GM12878 (cell line): ENCODE measurements at regions of chr2 and their contacts with region 1.

Region 1: DNA sequence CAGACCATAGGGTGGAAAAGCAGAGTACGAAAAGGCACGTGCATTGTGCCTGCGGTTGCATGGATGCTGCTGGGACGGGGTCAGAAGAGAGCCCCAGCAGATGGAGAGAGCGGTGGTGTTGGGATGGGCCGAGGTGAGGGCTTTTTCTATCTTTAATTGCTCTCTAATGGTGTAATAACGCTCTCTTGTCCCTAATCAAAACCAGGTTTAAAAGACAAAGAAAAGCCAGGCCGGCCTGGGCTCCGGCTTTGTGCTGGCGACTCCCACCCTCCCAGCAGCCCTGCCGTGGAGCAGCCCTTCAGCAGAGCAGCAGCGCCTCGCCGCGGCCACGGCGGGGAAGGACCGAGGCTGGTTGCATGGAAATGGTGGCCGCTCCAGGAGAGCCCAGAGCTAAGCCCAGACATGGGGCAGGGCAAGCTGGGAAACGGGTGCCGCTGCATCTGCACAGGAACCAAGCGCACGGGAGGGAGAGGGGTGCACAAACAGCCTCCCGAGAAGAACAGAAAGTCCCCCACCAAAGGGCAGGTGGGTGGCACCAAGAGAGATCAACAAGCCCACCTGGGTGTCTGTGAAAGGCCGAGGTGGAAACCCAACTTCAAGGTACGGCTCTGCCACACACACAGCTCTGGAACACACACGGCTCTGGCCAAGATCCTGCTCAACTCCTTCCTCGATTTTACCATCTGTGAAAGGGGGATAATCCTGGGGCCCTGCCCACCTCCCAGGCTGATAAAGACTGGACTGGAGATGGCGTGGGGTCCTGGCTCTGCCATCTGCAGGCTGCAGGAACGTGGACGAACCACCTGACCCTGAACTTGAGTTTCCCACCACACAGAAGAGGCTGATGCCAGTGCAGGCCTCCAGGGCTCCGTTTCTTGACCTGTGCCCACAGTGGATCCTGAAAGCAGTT is 15.0 kb downstream of the HS1BP3 start:
- DNase-seq: no peak
- ATAC-seq: peak; percentile 95
- H3K4me3 ChIP-seq: no peak overlapping the region
- H3K27ac ChIP-seq: no peak overlapping the region
- H3K4me1 ChIP-seq: peaks cover 17% of the 10 kb centered on the region
- H3K27me3 ChIP-seq: no peaks in the 10 kb centered on the region
- CTCF ChIP-seq: peak; percentile 81 to 93 (median 88)
- EP300 ChIP-seq: no peak
- POLR2A ChIP-seq: no peak
- RAD21 ChIP-seq: peak; percentile 98

Region 2: GRCh38 chr2:20424300-20425290 is 211.3 kb before region 1 on chr2:
- CTCF ChIA-PET with region 1: interaction called, 4 read pairs
- POLR2A ChIA-PET with region 1: no interaction called
- RAD21 ChIA-PET with region 1: no interaction called
- SMC1A ChIA-PET with region 1: interaction called, 11 read pairs
- in situ Hi-C with region 1: no loop called
- intact Hi-C with region 1: no loop called
- DNase-seq: peak; percentile 57
- ATAC-seq: peak; percentile 76
- H3K4me3 ChIP-seq: peak overlapping the region; percentile 17; the same call in 1 of the 2 replicates
- H3K27ac ChIP-seq: peak overlapping the region; percentile 68
- H3K4me1 ChIP-seq: peaks cover 34% of the 10 kb centered on the region
- H3K27me3 ChIP-seq: no peaks in the 10 kb centered on the region
- CTCF ChIP-seq: no peak
- EP300 ChIP-seq: no peak
- POLR2A ChIP-seq: 0 out of 2 replicates have a peak, but pooled peaks have one; percentile 32
- RAD21 ChIP-seq: no peak

Region 3: DNA sequence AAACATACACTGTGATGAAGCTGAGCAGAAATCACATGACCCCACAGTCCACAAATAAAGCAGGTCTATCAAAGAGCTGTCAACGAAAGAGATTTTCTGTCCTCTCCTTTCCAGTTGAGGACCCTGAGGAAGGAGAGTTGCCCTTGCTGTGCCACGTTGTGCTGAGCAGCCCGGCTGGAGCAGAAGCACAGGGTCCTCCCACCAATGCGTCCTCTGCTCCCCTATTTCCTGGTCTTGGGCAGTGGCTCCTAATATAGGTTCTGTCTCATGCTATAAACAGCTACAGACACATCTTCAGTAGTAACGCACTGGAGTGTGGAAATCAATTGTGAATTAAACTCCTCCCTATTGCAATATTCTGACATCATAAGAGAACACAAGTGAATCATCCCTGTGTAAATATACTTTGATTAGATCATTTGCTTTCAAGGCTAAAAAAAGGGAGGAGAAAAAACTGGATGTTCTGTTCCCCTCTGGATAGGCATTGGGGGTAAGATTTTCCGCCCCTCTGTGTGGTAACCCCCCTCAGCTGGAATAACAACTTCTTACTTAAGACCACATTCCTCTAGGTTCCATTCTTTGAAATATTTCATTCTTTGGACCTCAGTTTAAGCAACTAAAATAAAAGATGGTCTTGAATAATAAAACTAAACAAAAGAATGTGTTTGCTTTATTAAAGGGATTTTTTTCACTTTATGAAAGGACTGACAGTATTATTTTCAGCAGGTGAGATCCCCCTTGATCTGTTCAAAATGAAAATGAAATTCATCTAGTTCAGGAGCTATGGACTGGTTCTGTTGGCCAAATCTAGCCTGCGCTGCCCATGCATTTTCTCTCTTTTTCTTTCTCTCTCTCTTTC is 197.4 kb before region 1 on chr2:
- CTCF ChIA-PET with region 1: interaction called, 119 read pairs
- POLR2A ChIA-PET with region 1: interaction called, 4 read pairs
- RAD21 ChIA-PET with region 1: interaction called, 107 read pairs
- SMC1A ChIA-PET with region 1: interaction called, 56 read pairs
- in situ Hi-C with region 1: loop called (anchors 5 kb)
- intact Hi-C with region 1: loop called (anchors 1 kb)
- DNase-seq: no peak
- ATAC-seq: no peak
- H3K4me3 ChIP-seq: no peak overlapping the region
- H3K27ac ChIP-seq: no peak overlapping the region
- H3K4me1 ChIP-seq: no peaks in the 10 kb centered on the region
- H3K27me3 ChIP-seq: peaks cover 2 to 3% of the 10 kb centered on the region in 2 experiments; a peak in 2 of 4 replicates
- CTCF ChIP-seq: no peak
- EP300 ChIP-seq: no peak
- POLR2A ChIP-seq: no peak
- RAD21 ChIP-seq: no peak

Region 4: DNA sequence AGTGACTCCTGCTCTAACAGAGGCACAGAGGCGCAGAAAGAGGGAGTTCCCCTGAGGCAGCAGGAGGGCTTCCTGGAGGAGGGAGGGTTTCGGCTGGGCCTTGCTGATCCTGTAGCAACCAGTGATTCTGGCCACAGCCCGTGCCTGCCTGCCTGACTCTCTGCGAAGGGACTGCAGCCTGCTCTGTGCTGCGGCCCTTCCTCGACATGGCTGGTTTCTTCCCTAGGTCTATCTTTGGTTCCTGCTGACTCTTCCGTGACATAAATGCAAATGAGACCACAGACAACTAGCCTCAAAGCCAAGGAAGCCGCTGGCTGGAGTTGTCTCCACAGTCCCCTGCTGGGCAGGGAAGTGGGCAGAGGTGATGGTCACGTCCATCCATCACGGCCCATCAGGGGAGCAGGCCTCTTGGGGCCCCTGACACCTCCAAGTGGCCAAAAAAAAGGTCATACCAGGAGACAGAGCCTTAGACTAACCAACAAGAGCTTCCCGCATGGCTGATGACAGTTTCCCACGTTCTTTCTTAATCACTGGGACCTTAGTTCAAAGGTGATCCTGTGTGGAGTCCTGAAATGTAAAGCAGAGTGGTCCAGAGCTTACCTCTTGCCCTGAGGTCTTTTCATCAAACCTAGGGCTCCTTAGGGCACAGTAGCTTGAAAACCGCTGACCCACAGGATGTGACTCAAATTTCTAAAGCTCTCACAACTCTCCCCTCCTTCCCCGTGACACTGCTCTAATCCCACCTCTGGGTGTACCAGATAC is 40.3 kb before region 1 on chr2:
- CTCF ChIA-PET with region 1: interaction called, 6 read pairs
- POLR2A ChIA-PET with region 1: interaction called, 6 read pairs
- RAD21 ChIA-PET with region 1: interaction called, 11 read pairs
- SMC1A ChIA-PET with region 1: interaction called, 10 read pairs
- in situ Hi-C with region 1: no loop called
- intact Hi-C with region 1: loop called (anchors 1 kb)
- DNase-seq: peak; percentile 85
- ATAC-seq: peak; percentile 92
- H3K4me3 ChIP-seq: peak overlapping the region; percentile 25; the same call in 1 of the 2 replicates
- H3K27ac ChIP-seq: peak overlapping the region; percentile 79
- H3K4me1 ChIP-seq: peaks cover 38% of the 10 kb centered on the region
- H3K27me3 ChIP-seq: no peaks in the 10 kb centered on the region
- CTCF ChIP-seq: no peak
- EP300 ChIP-seq: peak; percentile 13 to 50; a peak in 3 of 4 replicates
- POLR2A ChIP-seq: peak; percentile 81
- RAD21 ChIP-seq: 0 out of 2 replicates have a peak, but pooled peaks have one; percentile 5

Region 5: GRCh38 chr2:20667151-20667530 is 31.2 kb after region 1 on chr2:
- CTCF ChIA-PET with region 1: no interaction called
- POLR2A ChIA-PET with region 1: no interaction called
- RAD21 ChIA-PET with region 1: no interaction called
- SMC1A ChIA-PET with region 1: no interaction called
- in situ Hi-C with region 1: no loop called
- intact Hi-C with region 1: no loop called
- DNase-seq: no peak
- ATAC-seq: peak; percentile 18
- H3K4me3 ChIP-seq: peak overlapping the region; percentile 73; the same call in 1 of the 2 replicates
- H3K27ac ChIP-seq: no peak overlapping the region
- H3K4me1 ChIP-seq: peaks cover 13% of the 10 kb centered on the region; the same call in 1 of the 2 replicates
- H3K27me3 ChIP-seq: peaks cover 22 to 33% of the 10 kb centered on the region in 2 experiments
- CTCF ChIP-seq: no peak
- EP300 ChIP-seq: no peak
- POLR2A ChIP-seq: no peak
- RAD21 ChIP-seq: no peak

Region 6: DNA sequence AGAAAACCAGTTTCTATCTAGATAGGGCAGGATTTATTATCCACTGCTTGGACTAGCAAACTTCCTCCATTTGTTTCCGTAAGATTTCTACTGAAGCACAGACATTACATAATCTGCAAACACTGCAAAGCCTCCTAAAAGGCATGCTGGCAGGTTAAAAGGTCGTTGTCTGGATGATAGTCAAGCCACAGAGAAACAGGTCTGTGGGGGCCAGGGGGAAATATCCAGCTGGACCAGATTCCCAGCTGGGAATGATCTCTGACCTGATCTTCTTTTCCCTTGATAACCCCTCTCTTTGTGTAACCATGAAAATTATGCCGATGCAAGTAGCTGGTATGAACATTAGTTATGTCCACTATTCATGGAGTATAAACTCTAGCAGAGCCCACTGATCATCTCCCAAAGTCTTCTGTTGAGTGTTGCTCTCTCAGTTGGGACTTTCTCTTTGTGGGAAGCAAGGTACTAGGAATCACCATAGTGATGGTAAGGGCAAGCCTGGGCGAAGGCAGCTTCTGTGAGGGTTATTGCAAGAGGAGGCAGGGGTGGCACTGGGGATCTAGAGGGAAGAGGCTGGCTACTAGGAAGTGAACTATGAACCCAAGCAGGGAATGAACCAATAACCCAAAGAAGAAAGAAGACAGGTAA is 92.3 kb after region 1 on chr2:
- CTCF ChIA-PET with region 1: no interaction called
- POLR2A ChIA-PET with region 1: no interaction called
- RAD21 ChIA-PET with region 1: no interaction called
- SMC1A ChIA-PET with region 1: no interaction called
- in situ Hi-C with region 1: no loop called
- intact Hi-C with region 1: no loop called
- DNase-seq: no peak
- ATAC-seq: no peak
- H3K4me3 ChIP-seq: no peak overlapping the region
- H3K27ac ChIP-seq: no peak overlapping the region; the same call in 1 of the 2 replicates
- H3K4me1 ChIP-seq: no peaks in the 10 kb centered on the region
- H3K27me3 ChIP-seq: no peaks in the 10 kb centered on the region
- CTCF ChIP-seq: no peak
- EP300 ChIP-seq: no peak
- POLR2A ChIP-seq: no peak
- RAD21 ChIP-seq: no peak

Region 7: DNA sequence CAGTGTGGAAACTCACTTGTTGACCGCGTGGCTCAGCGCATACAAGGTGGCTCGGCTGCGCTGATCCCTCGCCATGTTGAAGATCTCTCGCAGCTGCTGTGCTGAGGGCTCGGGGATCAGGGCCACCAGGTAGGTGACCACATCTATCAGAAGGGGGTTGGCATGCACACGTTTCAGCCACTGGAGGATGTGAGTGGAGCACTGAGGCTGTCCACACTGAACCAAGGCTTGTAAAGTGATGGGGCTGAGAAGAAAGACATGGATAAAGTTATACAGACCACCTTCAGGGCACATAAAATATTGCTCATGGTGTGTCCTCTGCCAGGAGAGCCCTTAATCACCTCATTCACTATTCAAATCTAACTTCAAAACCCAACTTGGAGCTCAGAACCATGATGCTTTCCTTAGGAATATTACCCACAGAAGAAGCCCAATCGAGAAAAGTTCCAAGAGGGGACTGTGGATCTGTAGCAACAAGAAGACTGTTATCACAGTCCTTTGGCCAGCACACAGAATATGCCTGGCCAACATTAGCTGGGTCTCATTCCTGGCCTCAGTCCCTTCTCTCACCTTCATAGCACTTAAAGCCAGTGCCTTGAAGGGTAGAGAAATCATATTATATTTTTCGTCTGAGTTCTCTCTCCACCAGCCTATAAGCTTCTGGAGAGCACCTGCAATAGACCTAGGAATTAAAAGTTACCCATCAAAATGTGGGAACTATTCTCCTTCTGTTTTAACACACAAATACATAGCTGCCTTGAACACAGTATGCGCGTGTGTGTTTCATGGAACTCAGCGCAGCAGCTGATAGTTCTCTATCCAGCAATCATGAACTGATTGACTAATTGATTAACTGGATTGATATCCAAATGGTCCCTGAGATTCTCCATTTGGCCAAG is 396.7 kb after region 1 on chr2:
- CTCF ChIA-PET with region 1: no interaction called
- POLR2A ChIA-PET with region 1: no interaction called
- RAD21 ChIA-PET with region 1: no interaction called
- SMC1A ChIA-PET with region 1: no interaction called
- in situ Hi-C with region 1: no loop called
- intact Hi-C with region 1: no loop called
- DNase-seq: no peak
- ATAC-seq: no peak
- H3K4me3 ChIP-seq: no peak overlapping the region
- H3K27ac ChIP-seq: no peak overlapping the region
- H3K4me1 ChIP-seq: no peaks in the 10 kb centered on the region
- H3K27me3 ChIP-seq: 0 out of 4 replicates have a peak, but pooled peaks cover 0 to 2% of the 10 kb centered on the region in 2 experiments
- CTCF ChIP-seq: no peak
- EP300 ChIP-seq: no peak
- POLR2A ChIP-seq: no peak
- RAD21 ChIP-seq: no peak